PC-3 (cell line): ENCODE measurements at regions of chr2 and their contacts with region 1.

Region 1: DNA sequence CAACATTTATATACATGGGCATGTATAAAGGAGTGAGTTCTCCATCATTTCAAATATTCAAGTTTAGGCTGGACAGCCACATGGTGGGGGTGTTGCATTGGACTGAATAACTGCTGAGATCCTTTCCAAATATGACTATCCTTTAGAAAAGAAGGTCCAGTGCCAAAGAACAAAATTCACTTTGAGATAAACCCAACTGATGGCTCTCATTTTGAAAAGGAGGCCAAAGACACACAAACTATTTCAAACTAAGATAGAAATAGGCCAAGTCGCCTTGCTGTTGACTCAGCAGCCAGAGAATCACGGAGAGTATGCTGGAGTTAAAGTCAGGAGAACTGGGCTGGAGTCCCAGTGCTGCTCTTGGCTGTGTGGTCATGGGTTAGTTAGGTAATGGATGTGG is 204.5 kb upstream of the LRATD1 start:
- DNase-seq: peak; percentile 60
- ATAC-seq: peak; percentile 81
- H3K4me3 ChIP-seq: no peak overlapping the region
- H3K27ac ChIP-seq: no peak overlapping the region
- H3K4me1 ChIP-seq: peaks cover 5% of the 10 kb centered on the region; the same call in 1 of the 2 replicates
- H3K27me3 ChIP-seq: no peaks in the 10 kb centered on the region
- CTCF ChIP-seq: peak; percentile 69

Region 2: DNA sequence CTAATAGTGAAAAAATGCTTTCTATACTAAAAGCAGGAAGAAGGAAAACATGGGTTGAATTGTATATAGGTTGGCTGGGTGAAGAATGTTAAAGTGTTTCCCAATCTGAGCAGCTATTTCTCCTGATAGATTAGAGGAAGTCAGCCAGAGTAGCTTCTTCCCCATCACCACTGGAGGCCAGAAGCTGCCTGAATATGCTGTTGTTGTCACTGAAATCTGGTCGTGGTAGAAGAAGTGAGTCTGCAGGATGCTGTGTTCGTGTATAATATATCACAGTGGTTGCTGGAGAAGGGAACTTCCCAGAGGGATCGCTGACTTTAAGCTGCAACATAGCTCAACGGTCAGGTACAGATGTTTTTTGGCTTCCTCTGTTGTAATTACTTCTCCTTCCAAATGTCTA is 43.0 kb before region 1 on chr2:
- CTCF ChIA-PET with region 1: no interaction called
- POLR2A ChIA-PET with region 1: no interaction called
- intact Hi-C with region 1: no loop called
- DNase-seq: peak; percentile 11
- ATAC-seq: peak; percentile 24; the same call in 1 of the 2 replicates
- H3K4me3 ChIP-seq: no peak overlapping the region
- H3K27ac ChIP-seq: no peak overlapping the region
- H3K4me1 ChIP-seq: no peaks in the 10 kb centered on the region
- H3K27me3 ChIP-seq: peaks cover 21% of the 10 kb centered on the region
- CTCF ChIP-seq: 0 out of 2 replicates have a peak, but pooled peaks have one; percentile 11

Region 3: DNA sequence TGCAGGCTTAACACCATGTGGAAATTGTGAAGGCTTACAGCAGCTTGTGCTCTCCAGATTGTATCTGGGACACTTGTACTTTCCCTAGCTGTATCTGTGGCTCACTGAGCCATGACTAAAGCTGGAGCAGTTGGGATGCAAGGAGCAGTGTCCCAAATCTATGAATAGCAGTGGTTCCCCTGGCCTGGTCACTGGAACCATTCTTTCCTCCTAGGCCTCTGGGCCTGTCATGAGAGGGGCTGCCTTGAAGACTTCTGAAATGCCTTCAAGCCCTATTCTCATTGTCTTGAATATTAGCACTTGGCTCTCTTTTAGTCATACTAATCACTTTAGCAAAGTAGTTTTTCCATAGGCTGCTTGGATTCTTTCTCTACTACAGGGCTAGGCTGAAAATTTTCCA is 17.6 kb after region 1 on chr2:
- CTCF ChIA-PET with region 1: no interaction called
- POLR2A ChIA-PET with region 1: no interaction called
- intact Hi-C with region 1: no loop called
- DNase-seq: no peak
- ATAC-seq: no peak
- H3K4me3 ChIP-seq: no peak overlapping the region
- H3K27ac ChIP-seq: no peak overlapping the region
- H3K4me1 ChIP-seq: no peaks in the 10 kb centered on the region
- H3K27me3 ChIP-seq: no peaks in the 10 kb centered on the region
- CTCF ChIP-seq: no peak

Region 4: GRCh38 chr2:14524057-14524802 is 96.2 kb after region 1 on chr2:
- CTCF ChIA-PET with region 1: interaction called, 6 read pairs
- POLR2A ChIA-PET with region 1: no interaction called
- intact Hi-C with region 1: loop called (anchors 1 kb)
- DNase-seq: peak; percentile 93
- ATAC-seq: peak; percentile 94
- H3K4me3 ChIP-seq: peak overlapping the region; percentile 29; the same call in 1 of the 2 replicates
- H3K27ac ChIP-seq: peak overlapping the region; percentile 95
- H3K4me1 ChIP-seq: peaks cover 45% of the 10 kb centered on the region
- H3K27me3 ChIP-seq: no peaks in the 10 kb centered on the region
- CTCF ChIP-seq: peak; percentile 18; the same call in 1 of the 2 replicates

Region 5: DNA sequence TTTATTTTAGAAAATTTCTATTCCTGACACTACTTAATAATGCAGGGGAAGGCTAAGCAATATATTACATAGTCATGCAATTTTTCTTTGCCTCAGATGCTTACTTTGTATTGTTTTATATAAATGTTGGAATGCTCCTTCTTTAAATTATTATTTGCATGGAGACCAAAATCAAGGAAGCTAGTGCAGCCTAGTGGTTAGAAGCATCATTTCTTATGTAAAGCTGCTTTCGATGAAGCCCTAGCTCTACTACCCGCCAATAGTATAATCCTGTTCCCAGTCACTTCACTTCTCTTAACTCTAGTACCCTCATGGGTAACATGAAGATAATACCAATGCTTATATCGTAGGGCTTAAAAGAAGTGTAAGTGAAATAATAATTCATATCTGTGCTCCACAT is 403.4 kb after region 1 on chr2:
- CTCF ChIA-PET with region 1: no interaction called
- POLR2A ChIA-PET with region 1: no interaction called
- intact Hi-C with region 1: loop called (anchors 1 kb)
- DNase-seq: peak; percentile 41
- ATAC-seq: peak; percentile 42; the same call in 1 of the 2 replicates
- H3K4me3 ChIP-seq: no peak overlapping the region
- H3K27ac ChIP-seq: no peak overlapping the region
- H3K4me1 ChIP-seq: peaks cover 20% of the 10 kb centered on the region
- H3K27me3 ChIP-seq: no peaks in the 10 kb centered on the region
- CTCF ChIP-seq: peak; percentile 63

Region 6: DNA sequence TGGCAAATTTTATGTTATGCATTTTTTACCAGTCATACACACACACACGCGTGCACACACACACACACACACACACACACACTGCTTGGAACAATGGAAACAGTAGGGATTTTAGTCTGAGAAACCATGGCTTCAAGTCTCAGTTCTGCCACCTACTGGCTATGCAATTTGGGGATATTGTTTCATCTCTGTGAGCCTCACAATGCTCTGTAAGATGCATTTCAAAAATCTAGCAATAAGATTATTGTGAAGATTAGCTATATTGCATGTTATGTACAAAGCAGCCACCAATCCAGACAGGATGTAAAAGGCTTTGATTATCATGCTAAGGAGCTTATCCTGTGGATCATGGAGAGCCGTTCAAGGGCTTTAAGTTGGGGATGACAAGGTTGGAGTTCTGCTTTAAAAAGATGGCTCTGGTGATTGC is 731.7 kb after region 1 on chr2:
- CTCF ChIA-PET with region 1: no interaction called
- POLR2A ChIA-PET with region 1: no interaction called
- intact Hi-C with region 1: loop called (anchors 2 kb)
- DNase-seq: peak; percentile 75
- ATAC-seq: peak; percentile 65
- H3K4me3 ChIP-seq: no peak overlapping the region
- H3K27ac ChIP-seq: no peak overlapping the region
- H3K4me1 ChIP-seq: peaks cover 8% of the 10 kb centered on the region
- H3K27me3 ChIP-seq: no peaks in the 10 kb centered on the region
- CTCF ChIP-seq: peak; percentile 79

Region 7: DNA sequence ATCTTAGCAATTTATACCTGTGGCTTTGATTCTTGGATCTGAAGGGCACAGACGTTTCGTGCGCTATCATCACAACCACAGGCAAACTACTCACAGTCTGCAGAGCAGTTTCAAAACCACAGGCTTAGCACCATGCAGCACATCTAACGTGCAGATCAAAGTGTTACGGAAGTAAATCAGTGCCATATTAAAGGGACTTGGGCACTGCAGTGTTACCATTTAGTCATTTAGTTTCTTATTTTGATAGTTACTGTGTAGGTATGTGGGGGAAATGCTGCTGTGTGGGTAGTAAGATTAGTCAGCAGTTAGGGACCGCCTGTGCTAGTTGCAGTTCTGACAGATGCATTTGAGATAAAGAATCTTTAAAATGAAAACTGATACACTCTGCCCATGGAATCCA is 749.0 kb after region 1 on chr2:
- CTCF ChIA-PET with region 1: no interaction called
- POLR2A ChIA-PET with region 1: no interaction called
- intact Hi-C with region 1: no loop called
- DNase-seq: peak; percentile 70
- ATAC-seq: no peak
- H3K4me3 ChIP-seq: no peak overlapping the region
- H3K27ac ChIP-seq: 0 out of 2 replicates have a peak overlapping the region, but pooled peaks have one; percentile 1
- H3K4me1 ChIP-seq: peaks cover 25% of the 10 kb centered on the region
- H3K27me3 ChIP-seq: no peaks in the 10 kb centered on the region
- CTCF ChIP-seq: no peak